ENCODE measurements at regions of chr16 and their contacts with region 1.

Region 1: DNA sequence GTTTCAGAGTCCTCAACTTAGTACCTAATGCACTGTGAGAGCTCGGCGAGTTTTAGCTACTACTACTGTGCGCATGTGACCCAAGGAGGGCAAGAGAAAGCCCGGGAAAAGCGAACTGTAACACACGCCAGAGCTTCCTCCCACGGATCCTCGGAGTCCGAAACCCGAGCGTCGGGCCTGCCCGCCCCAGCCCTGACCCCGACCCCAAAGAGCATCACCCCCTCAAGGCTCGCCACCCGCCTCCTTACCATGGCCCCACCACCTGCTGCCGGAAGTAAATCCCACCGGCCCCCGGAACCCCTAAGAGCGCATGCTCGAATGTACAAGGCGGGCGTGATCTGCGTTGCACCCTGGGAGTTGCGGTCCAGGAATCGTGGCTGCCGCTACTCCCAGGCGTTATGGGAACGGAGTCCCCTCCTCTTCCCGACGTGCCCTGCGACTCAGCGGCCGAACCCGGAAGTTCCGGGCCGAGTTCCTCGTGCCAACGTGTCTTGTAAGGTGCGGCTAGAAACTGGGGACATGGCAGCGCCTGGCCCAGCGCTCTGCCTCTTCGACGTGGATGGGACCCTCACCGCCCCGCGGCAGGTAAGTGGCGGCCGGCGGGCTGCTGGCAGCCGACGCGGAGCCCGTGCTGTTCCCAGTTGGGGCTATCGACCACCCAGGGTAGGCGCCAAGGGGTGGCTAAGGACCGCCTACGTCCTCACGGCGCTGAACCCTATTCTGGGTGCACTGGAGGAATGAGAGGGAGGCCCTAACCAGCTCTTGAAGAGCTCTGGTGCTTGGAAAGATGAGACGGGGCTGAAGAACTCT is at the starts of genes PMM2 and TMEM186:
- DNase-seq: peak; percentile 94 to 96 (median 94)
- H3K4me3 ChIP-seq: peak within 1 kb of the TSS; percentile 94
- H3K27ac ChIP-seq: peak within 1 kb of the TSS in 1 of 2 donors; percentile 43
- H3K4me1 ChIP-seq: peaks cover 3% of the 10 kb centered on the region
- H3K27me3 ChIP-seq: no peaks in the 10 kb centered on the region
- CTCF ChIP-seq: peak in 1 of 3 donors; percentile 24
- EP300 ChIP-seq: no peak
- POLR2A ChIP-seq: peak; percentile 32
- total RNA-seq, gene PMM2: 14.2 to 38.6 (median 23.1) TPM
- total RNA-seq, gene TMEM186: 4.9 to 11.2 (median 9.6) TPM

Region 2: GRCh38 chr16:8567750-8568617 is 229.6 kb before region 1 on chr16:
- intact Hi-C with region 1: loop called in 1 of 4 experiments (anchors 5 kb)
- DNase-seq: peak; percentile 47 to 79 (median 75)
- H3K4me3 ChIP-seq: no peak overlapping the region
- H3K27ac ChIP-seq: no peak overlapping the region
- H3K4me1 ChIP-seq: no peaks in the 10 kb centered on the region
- H3K27me3 ChIP-seq: no peaks in the 10 kb centered on the region
- CTCF ChIP-seq: peak; percentile 82 to 94 (median 91)
- EP300 ChIP-seq: no peak
- POLR2A ChIP-seq: no peak

Region 3: DNA sequence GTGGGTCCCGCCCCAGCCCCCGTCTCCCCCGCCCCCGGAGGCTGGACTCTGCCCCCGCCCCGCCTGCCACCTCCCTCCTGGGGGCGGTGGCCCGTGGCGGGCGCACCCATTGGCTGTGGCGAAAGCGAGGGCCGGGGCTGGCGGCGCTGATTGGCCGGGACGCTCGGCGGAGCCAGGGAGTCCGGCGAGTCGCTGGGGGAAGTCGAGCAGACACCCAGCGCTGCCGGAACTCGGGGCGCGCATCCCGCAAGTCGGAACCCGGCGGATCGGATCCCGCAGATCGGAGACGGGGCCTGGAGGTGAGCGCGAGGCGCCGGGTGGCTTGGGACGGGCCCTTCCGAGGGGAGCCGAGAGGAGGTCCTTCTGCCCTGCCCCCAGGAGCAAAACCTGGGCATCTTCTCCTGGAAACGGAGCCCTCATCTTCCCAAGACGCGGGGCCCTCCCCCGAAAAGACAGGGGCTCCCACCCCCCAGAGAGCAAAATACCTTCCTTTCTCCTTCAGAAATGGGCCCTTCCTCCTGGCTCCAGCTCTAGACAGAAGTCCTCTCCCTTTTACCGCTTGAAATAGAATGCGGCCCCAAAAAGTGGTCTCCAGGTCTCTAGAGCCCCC is 123.1 kb before region 1 on chr16 and contains the start of gene ABAT:
- intact Hi-C with region 1: loop called in 1 of 4 experiments (anchors 10 kb)
- DNase-seq: peak; percentile 84 to 92 (median 89)
- H3K4me3 ChIP-seq: peak within 1 kb of the TSS; percentile 63
- H3K27ac ChIP-seq: peak within 1 kb of the TSS in 1 of 2 donors; percentile 46
- H3K4me1 ChIP-seq: peaks cover 5% of the 10 kb centered on the region
- H3K27me3 ChIP-seq: no peaks in the 10 kb centered on the region
- CTCF ChIP-seq: no peak
- EP300 ChIP-seq: no peak
- POLR2A ChIP-seq: peak; percentile 28
- total RNA-seq, gene ABAT: 3.8 to 20.3 (median 11.4) TPM

Region 4: DNA sequence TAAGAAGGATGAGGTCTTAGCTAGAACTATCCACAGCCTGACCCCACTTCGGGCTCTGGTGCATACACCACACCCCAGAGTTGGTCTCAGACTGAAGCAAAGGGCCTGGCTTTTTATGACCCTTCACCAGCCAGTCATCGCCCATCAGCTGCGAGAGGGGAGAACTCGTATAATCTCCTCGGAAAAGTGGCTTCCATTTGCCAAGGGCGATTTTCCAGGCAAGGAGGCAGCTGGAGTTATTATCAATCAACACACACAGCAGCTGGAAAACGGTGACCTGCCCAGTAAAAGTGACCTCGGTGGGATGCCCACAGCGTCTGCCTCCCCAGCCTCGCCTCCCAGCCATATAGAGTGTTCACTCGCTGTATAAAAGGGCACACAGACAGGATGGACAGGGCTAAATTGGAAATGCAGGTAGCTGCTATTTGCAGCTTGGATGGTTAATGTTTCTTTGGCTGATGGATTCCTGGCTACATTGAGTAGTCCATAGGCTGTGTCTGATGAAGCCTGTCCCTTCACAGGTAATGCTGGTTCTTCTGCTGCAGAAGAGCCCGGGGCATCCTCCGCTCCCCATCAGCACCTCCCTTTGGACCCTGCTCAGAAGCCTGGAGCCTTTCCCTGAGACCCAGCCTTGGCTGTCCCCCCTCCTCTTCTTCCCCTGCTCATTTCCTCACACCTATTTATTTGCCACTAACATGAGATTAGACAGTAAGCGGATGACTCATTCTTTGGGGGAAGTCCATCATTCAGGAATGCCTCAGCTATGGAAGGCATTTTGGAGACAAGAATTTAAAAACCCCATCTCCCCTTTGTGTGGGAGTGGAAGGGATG is 45.9 kb before region 1 on chr16:
- intact Hi-C with region 1: loop called in 1 of 4 experiments (anchors 2 kb)
- DNase-seq: no peak
- H3K4me3 ChIP-seq: no peak overlapping the region
- H3K27ac ChIP-seq: no peak overlapping the region
- H3K4me1 ChIP-seq: no peaks in the 10 kb centered on the region
- H3K27me3 ChIP-seq: no peaks in the 10 kb centered on the region
- CTCF ChIP-seq: no peak
- EP300 ChIP-seq: no peak
- POLR2A ChIP-seq: no peak

Region 5: DNA sequence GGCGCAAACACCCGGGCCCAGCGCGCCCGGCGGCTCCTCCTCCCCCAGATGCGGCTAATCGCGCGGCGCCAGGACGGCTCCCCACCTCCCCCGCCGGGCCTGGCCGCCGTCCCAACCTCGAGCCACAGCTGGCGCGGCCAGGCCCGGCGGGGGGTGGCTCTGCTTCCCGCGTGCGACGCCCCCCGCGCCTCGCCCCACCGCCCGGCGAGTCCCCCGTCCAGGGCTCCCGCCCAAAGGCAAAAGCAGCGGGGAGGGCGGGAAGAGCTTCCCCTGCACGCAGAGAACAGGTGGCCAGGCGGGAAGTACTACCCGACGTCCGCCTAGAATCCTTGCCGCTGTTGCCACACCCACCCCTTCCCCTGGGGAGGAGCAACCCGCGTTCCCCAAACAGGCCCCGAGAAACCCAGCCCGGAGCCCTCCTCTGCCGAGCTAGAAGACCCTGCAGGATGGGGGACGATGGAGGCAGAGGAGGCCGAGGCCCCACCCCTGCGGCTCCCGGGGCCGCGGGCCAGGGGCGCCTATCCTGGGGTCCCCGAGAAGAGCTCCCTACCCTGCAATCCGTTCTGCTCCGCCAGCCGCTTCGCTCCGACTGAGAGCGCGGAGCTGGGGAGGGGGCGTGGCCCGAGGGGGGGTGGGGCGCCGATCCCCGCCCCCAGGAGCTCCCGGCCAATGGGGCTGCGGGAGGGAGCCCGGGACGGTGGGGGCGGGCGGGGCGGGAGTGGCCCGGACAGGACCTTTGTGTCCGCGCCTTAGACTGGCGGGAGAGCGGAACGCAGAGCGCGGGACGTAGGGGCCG is 71.0 kb after region 1 on chr16 and contains the start of gene CARHSP1:
- intact Hi-C with region 1: loop called in 1 of 4 experiments (anchors 5 kb)
- DNase-seq: peak; percentile 85 to 93 (median 91)
- H3K4me3 ChIP-seq: peak within 1 kb of the TSS; percentile 81
- H3K27ac ChIP-seq: peak within 1 kb of the TSS; percentile 77 to 88
- H3K4me1 ChIP-seq: peaks cover 18% of the 10 kb centered on the region
- H3K27me3 ChIP-seq: no peaks in the 10 kb centered on the region
- CTCF ChIP-seq: no peak
- EP300 ChIP-seq: no peak
- POLR2A ChIP-seq: peak; percentile 51
- total RNA-seq, gene CARHSP1: 65.0 to 94.3 (median 81.7) TPM

Region 6: GRCh38 chr16:8878521-8878911 is 80.9 kb after region 1 on chr16:
- intact Hi-C with region 1: loop called in 2 of 4 experiments (anchors 5 kb)
- DNase-seq: no peak
- H3K4me3 ChIP-seq: no peak overlapping the region
- H3K27ac ChIP-seq: no peak overlapping the region
- H3K4me1 ChIP-seq: peaks cover 1% of the 10 kb centered on the region
- H3K27me3 ChIP-seq: no peaks in the 10 kb centered on the region
- CTCF ChIP-seq: no peak
- EP300 ChIP-seq: no peak
- POLR2A ChIP-seq: no peak